CD4-positive, alpha-beta T cell (primary cell): ENCODE measurements at regions of chr7 and their contacts with region 1.

Region 1: DNA sequence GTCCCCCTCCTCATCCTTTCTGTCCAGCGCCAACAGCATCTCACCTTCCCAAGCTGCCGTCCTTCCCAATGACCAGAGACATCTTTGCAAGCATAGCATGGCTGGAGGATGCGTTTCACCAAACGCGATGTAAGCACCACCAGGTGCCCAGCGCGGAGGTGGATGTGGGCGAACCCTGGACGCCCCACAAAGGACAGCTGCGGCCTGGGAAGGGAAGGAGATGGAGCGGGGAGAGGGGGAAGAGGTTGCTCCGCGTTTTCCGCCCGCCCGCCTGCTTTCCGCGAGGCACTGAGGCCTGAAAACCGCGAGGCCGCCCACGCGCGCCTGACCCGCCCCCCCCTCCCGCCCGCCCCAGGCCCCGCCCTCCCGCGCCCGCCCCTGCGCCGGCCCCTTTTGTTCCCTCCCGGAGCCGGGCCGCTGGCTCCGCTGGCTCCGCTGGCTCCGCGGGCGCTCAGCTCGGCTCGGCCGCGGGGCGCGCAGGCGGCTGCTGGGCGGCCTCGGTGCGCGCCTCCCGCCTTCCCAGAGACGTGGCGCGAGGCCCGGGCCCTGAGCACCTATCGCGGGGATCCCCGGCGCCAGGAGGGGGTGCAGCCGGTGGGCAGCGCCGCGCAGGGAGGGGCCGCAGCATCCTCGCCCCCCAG is at the start of gene CLIP2:
- DNase-seq: peak; percentile 61 to 89 (median 72)
- ATAC-seq: peak; percentile 91
- H3K4me3 ChIP-seq: peak within 1 kb of the TSS; percentile 58
- H3K4me3 Mint-ChIP-seq: peak within 1 kb of the TSS; percentile 86
- H3K27ac ChIP-seq: no peak within 1 kb of the TSS
- H3K27ac Mint-ChIP-seq: no peak within 1 kb of the TSS
- H3K4me1 ChIP-seq: peaks cover 26% of the 10 kb centered on the region
- H3K4me1 Mint-ChIP-seq: peaks cover 25% of the 10 kb centered on the region
- H3K27me3 ChIP-seq: no peaks in the 10 kb centered on the region
- H3K27me3 Mint-ChIP-seq: peaks cover 4% of the 10 kb centered on the region
- CTCF ChIP-seq: no peak
- total RNA-seq, gene CLIP2: 2.4 to 2.7 TPM

Region 2: GRCh38 chr7:74083117-74083876 is 205.8 kb before region 1 on chr7 and contains the start of gene LIMK1:
- CTCF ChIA-PET with region 1: no interaction called
- POLR2A ChIA-PET with region 1: no interaction called
- intact Hi-C with region 1: loop called in 1 of 2 experiments (anchors 5 kb)
- DNase-seq: peak; percentile 63 to 94 (median 82)
- ATAC-seq: peak; percentile 95
- H3K4me3 ChIP-seq: peak within 1 kb of the TSS; percentile 67
- H3K4me3 Mint-ChIP-seq: peak within 1 kb of the TSS; percentile 88
- H3K27ac ChIP-seq: no peak within 1 kb of the TSS
- H3K27ac Mint-ChIP-seq: peak within 1 kb of the TSS; percentile 62
- H3K4me1 ChIP-seq: peaks cover 20% of the 10 kb centered on the region
- H3K4me1 Mint-ChIP-seq: peaks cover 9% of the 10 kb centered on the region
- H3K27me3 ChIP-seq: no peaks in the 10 kb centered on the region
- H3K27me3 Mint-ChIP-seq: no peaks in the 10 kb centered on the region
- CTCF ChIP-seq: no peak
- total RNA-seq, gene LIMK1: 7.8 to 8.2 TPM

Region 3: GRCh38 chr7:74173866-74174605 is 115.1 kb before region 1 on chr7 and contains the start of gene EIF4H:
- CTCF ChIA-PET with region 1: no interaction called
- POLR2A ChIA-PET with region 1: interaction called, 5 read pairs
- intact Hi-C with region 1: loop called in 1 of 2 experiments (anchors 2 kb)
- DNase-seq: peak; percentile 92 to 98 (median 95)
- ATAC-seq: peak; percentile 85
- H3K4me3 ChIP-seq: peak within 1 kb of the TSS; percentile 85
- H3K4me3 Mint-ChIP-seq: peak within 1 kb of the TSS; percentile 96
- H3K27ac ChIP-seq: peak within 1 kb of the TSS; percentile 61 to 75
- H3K27ac Mint-ChIP-seq: peak within 1 kb of the TSS; percentile 95
- H3K4me1 ChIP-seq: peaks cover 46% of the 10 kb centered on the region
- H3K4me1 Mint-ChIP-seq: peaks cover 53% of the 10 kb centered on the region
- H3K27me3 ChIP-seq: no peaks in the 10 kb centered on the region
- H3K27me3 Mint-ChIP-seq: no peaks in the 10 kb centered on the region
- CTCF ChIP-seq: no peak
- total RNA-seq, gene EIF4H: 311 to 316 TPM

Region 4: GRCh38 chr7:74240482-74240881 is 48.7 kb before region 1 on chr7:
- CTCF ChIA-PET with region 1: no interaction called
- POLR2A ChIA-PET with region 1: no interaction called
- intact Hi-C with region 1: no loop called
- DNase-seq: no peak
- ATAC-seq: no peak
- H3K4me3 ChIP-seq: no peak overlapping the region
- H3K4me3 Mint-ChIP-seq: no peak overlapping the region
- H3K27ac ChIP-seq: no peak overlapping the region
- H3K27ac Mint-ChIP-seq: no peak overlapping the region
- H3K4me1 ChIP-seq: peaks cover 3% of the 10 kb centered on the region
- H3K4me1 Mint-ChIP-seq: no peaks in the 10 kb centered on the region
- H3K27me3 ChIP-seq: no peaks in the 10 kb centered on the region
- H3K27me3 Mint-ChIP-seq: no peaks in the 10 kb centered on the region
- CTCF ChIP-seq: no peak

Region 5: DNA sequence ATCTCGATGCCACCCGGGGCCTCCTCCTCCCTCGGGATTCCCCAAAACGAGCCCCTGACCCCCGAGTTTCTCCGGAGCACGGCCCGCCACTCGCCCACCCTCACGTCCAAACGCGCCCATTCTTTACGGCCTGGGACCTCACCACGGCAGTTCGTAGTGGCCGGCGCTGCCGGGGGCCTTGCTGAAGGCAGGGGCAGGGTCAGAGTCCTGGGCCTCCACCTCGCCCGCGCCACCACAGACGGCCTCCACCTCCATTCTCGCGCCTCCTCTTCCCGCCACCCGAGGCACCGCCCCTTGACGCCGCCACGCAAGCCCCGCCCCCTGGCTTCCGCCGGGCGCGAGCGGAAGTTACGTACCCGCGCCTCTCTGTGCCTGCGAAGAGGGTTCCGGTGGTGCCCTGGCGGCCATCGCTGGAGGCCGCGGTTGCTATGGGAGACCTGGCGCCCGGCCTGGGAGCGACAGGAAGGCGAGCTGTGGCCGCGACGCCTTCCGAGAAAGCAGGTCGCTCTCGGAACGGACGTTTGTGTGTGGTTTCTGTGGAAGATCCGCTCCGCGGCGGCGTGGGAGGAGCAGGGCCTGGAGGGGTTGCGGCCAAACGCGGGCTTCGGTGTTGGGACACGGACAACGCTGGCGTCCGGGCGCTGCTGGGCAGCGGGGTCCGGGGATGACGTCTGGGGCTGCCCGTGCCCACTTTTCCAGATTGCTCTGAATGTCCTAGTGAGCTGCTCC is 34.8 kb before region 1 on chr7 and contains the start of gene RFC2:
- CTCF ChIA-PET with region 1: no interaction called
- POLR2A ChIA-PET with region 1: no interaction called
- intact Hi-C with region 1: loop called (anchors 1 kb)
- DNase-seq: peak; percentile 91 to 99 (median 96)
- ATAC-seq: peak; percentile 96
- H3K4me3 ChIP-seq: peak within 1 kb of the TSS; percentile 92
- H3K4me3 Mint-ChIP-seq: peak within 1 kb of the TSS; percentile 92
- H3K27ac ChIP-seq: peak within 1 kb of the TSS; percentile 83
- H3K27ac Mint-ChIP-seq: peak within 1 kb of the TSS; percentile 93
- H3K4me1 ChIP-seq: peaks cover 31% of the 10 kb centered on the region
- H3K4me1 Mint-ChIP-seq: peaks cover 26% of the 10 kb centered on the region
- H3K27me3 ChIP-seq: no peaks in the 10 kb centered on the region
- H3K27me3 Mint-ChIP-seq: no peaks in the 10 kb centered on the region
- CTCF ChIP-seq: peak; percentile 33
- total RNA-seq, gene RFC2: 8.5 to 9.6 TPM

Region 6: GRCh38 chr7:74272305-74273038 is 16.7 kb before region 1 on chr7:
- CTCF ChIA-PET with region 1: interaction called, 3 read pairs
- POLR2A ChIA-PET with region 1: interaction called, 19 read pairs
- intact Hi-C with region 1: loop called (anchors 1 kb)
- DNase-seq: peak in 3 of 14 experiments; percentile 21 to 61 (median 59)
- ATAC-seq: no peak
- H3K4me3 ChIP-seq: no peak overlapping the region
- H3K4me3 Mint-ChIP-seq: peak overlapping the region; percentile 20
- H3K27ac ChIP-seq: no peak overlapping the region
- H3K27ac Mint-ChIP-seq: no peak overlapping the region
- H3K4me1 ChIP-seq: peaks cover 11% of the 10 kb centered on the region
- H3K4me1 Mint-ChIP-seq: peaks cover 8% of the 10 kb centered on the region
- H3K27me3 ChIP-seq: no peaks in the 10 kb centered on the region
- H3K27me3 Mint-ChIP-seq: peaks cover 9% of the 10 kb centered on the region
- CTCF ChIP-seq: no peak

Region 7: DNA sequence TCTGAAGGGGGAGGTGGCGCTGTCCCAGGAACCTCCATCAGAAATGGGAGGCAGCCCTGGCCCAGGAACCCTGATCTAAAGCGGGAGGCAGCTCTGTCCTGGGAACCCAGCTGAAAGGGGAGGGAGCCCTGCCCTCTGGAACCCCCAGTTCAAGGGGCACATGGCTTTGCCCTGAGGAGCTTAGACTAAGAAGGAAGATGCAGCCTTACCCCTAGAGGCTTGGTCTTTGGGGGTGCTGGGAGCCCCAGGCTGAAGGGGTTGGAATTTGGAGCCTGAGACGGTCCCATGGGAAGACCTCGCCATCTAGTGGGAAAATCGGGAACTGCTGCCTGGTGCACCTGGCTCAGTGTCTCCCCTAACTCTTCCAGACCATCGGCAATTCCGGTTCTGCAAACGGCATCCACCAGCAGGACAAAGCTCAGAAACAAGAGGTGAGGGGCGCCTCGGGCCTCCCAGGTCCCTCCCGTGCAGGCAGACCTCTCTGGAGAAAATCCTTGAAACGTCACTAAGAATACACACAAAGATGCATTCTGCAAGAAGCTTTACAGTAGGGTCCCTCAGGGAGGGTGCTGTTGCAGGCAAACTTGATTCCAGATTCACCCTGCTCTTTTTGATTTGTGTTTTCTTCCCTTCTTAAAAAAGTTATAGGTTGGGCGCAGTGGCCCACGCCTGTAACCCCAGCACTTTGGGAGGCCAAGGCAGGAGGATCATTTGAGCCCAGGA is 112.2 kb after region 1 on chr7:
- CTCF ChIA-PET with region 1: no interaction called
- POLR2A ChIA-PET with region 1: no interaction called
- intact Hi-C with region 1: loop called in 1 of 2 experiments (anchors 10 kb)
- DNase-seq: peak; percentile 56 to 83 (median 66)
- ATAC-seq: peak; percentile 56
- H3K4me3 ChIP-seq: no peak overlapping the region
- H3K4me3 Mint-ChIP-seq: no peak overlapping the region
- H3K27ac ChIP-seq: no peak overlapping the region
- H3K27ac Mint-ChIP-seq: no peak overlapping the region
- H3K4me1 ChIP-seq: peaks cover 4% of the 10 kb centered on the region
- H3K4me1 Mint-ChIP-seq: no peaks in the 10 kb centered on the region
- H3K27me3 ChIP-seq: no peaks in the 10 kb centered on the region
- H3K27me3 Mint-ChIP-seq: no peaks in the 10 kb centered on the region
- CTCF ChIP-seq: peak; percentile 92

Region 8: GRCh38 chr7:74672343-74672915 is 383.3 kb after region 1 on chr7:
- CTCF ChIA-PET with region 1: no interaction called
- POLR2A ChIA-PET with region 1: no interaction called
- intact Hi-C with region 1: no loop called
- DNase-seq: no peak
- ATAC-seq: no peak
- H3K4me3 ChIP-seq: no peak overlapping the region
- H3K4me3 Mint-ChIP-seq: no peak overlapping the region
- H3K27ac ChIP-seq: no peak overlapping the region
- H3K27ac Mint-ChIP-seq: peak overlapping the region; percentile 62
- H3K4me1 ChIP-seq: peaks cover 15% of the 10 kb centered on the region
- H3K4me1 Mint-ChIP-seq: peaks cover 55% of the 10 kb centered on the region
- H3K27me3 ChIP-seq: no peaks in the 10 kb centered on the region
- H3K27me3 Mint-ChIP-seq: no peaks in the 10 kb centered on the region
- CTCF ChIP-seq: no peak